WTC11 (cell line): ENCODE measurements at regions of chr5 and their contacts with region 1.

Region 1: GRCh38 chr5:154157483-154158378 is 32.8 kb upstream of the GALNT10 start:
- DNase-seq: peak; percentile 72
- ATAC-seq: peak; percentile 85
- H3K4me3 Mint-ChIP-seq: no peak overlapping the region
- H3K27ac Mint-ChIP-seq: no peak overlapping the region
- H3K4me1 Mint-ChIP-seq: peaks cover 2% of the 10 kb centered on the region
- H3K27me3 Mint-ChIP-seq: no peaks in the 10 kb centered on the region
- CTCF ChIP-seq: peak; percentile 96

Region 2: GRCh38 chr5:154072414-154073171 is 85.1 kb before region 1 on chr5:
- CTCF ChIA-PET with region 1: interaction called, 48 read pairs
- POLR2A ChIA-PET with region 1: no interaction called
- DNase-seq: peak; percentile 87
- ATAC-seq: peak; percentile 92
- H3K4me3 Mint-ChIP-seq: no peak overlapping the region
- H3K27ac Mint-ChIP-seq: no peak overlapping the region
- H3K4me1 Mint-ChIP-seq: peaks cover 10% of the 10 kb centered on the region
- H3K27me3 Mint-ChIP-seq: peaks cover 6% of the 10 kb centered on the region
- CTCF ChIP-seq: peak; percentile 92

Region 3: DNA sequence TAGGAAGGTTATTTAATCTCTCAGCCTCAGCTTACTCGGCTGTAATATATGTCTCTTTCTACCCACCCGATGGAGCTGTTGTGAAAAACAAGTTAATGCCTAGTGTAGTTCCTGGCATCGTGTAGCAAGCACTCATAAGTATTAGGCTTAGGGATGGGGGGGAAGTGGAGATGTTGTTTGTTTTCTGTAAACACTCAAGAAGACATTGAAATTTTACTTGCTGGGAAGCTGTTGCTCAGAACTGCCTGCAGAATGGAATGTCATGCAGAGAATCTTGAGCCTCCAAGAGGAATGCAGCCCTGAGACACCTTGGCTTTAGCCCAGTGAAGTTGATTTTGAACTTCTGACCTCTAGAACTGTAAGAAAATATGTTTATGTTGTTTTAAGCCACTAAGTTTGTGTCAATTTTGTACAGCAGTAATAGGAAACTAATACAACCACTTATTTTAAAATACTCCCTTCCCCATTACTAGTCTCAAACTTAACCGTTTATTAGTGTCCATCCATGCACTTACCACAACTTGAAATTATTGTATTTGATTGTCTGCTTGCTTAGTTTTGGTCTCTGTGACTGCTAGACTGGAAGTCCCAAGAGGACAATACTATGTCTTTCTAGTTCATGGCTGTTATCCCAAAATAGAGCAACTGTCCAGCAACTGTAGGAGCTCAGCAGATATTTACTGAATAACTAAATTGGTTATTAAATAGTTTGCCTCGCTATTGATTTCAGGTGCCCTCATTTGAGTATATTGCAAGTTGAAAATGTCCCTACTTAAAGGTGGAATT is 65.2 kb before region 1 on chr5:
- CTCF ChIA-PET with region 1: interaction called, 14 read pairs
- POLR2A ChIA-PET with region 1: no interaction called
- DNase-seq: no peak
- ATAC-seq: peak; percentile 57
- H3K4me3 Mint-ChIP-seq: no peak overlapping the region
- H3K27ac Mint-ChIP-seq: no peak overlapping the region
- H3K4me1 Mint-ChIP-seq: peaks cover 20% of the 10 kb centered on the region
- H3K27me3 Mint-ChIP-seq: no peaks in the 10 kb centered on the region; the same call in 1 of the 2 replicates
- CTCF ChIP-seq: no peak

Region 4: GRCh38 chr5:154118893-154119336 is 38.8 kb before region 1 on chr5:
- CTCF ChIA-PET with region 1: interaction called, 11 read pairs
- POLR2A ChIA-PET with region 1: no interaction called
- DNase-seq: no peak
- ATAC-seq: peak; percentile 70
- H3K4me3 Mint-ChIP-seq: no peak overlapping the region
- H3K27ac Mint-ChIP-seq: no peak overlapping the region
- H3K4me1 Mint-ChIP-seq: peaks cover 17% of the 10 kb centered on the region
- H3K27me3 Mint-ChIP-seq: peaks cover 9% of the 10 kb centered on the region
- CTCF ChIP-seq: no peak

Region 5: DNA sequence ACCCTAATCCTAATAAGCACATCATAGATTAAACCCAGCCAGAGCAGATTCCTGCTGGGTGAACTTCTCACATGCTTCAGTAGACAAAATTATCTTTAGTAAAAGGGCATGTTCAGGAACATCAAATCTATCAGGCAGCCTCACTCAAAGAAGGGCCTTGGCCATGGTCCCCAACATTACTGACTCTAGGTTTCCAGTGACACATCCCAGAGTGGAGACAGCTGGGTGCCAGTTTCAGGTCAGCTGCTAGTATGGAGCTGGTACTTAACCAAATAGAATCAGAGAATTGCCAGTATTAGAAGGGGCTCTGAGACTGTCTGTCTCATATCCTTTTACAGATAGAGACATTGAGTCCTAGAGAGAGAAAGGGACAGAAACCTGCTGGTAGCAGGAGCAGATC is 11.3 kb before region 1 on chr5:
- CTCF ChIA-PET with region 1: interaction called, 31 read pairs
- POLR2A ChIA-PET with region 1: no interaction called
- DNase-seq: no peak
- ATAC-seq: no peak
- H3K4me3 Mint-ChIP-seq: no peak overlapping the region
- H3K27ac Mint-ChIP-seq: no peak overlapping the region
- H3K4me1 Mint-ChIP-seq: peaks cover 15% of the 10 kb centered on the region
- H3K27me3 Mint-ChIP-seq: peaks cover 13% of the 10 kb centered on the region
- CTCF ChIP-seq: no peak

Region 6: DNA sequence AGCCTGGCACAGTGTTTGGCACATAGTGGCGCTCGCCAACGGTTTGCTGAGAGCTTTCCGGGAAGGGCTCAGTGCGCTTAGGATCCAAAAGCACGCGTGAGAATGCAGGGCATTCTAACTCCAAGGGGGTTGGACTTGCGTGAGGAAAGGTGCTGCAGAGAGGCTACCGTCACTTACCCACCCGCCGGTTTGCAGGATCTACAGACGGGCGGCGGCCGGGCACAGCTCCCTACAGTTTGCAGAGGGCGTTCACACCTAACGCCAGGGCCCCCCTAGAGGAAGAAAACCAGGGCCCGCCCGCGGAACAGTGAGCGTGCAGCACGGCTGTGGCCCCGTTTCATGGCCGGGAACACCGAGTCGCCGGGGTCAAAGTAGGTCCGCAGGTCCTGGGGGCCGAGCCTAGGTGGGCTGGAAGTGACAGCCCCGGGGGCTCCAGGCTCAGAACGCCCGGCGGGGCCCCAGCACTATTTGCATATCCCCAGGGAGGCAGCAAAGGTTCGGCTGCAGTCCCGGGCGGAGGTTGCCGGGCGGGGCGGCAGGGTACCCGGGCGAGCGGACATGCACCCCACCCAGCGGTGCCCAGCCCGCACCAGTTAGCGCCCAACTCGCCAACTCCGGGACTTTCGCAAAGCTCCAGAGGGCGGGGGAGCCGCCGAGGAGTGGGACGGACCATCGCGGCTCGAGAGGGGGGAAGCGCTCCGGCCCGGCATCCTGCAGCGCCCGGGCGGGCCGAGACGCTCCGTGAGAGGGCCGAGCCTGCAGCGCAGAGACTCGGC is 32.3 kb after region 1 on chr5:
- CTCF ChIA-PET with region 1: interaction called, 25 read pairs
- POLR2A ChIA-PET with region 1: interaction called, 3 read pairs
- DNase-seq: peak; percentile 81
- ATAC-seq: peak; percentile 61
- H3K4me3 Mint-ChIP-seq: peak overlapping the region; percentile 73
- H3K27ac Mint-ChIP-seq: no peak overlapping the region
- H3K4me1 Mint-ChIP-seq: peaks cover 50% of the 10 kb centered on the region
- H3K27me3 Mint-ChIP-seq: peaks cover 52% of the 10 kb centered on the region
- CTCF ChIP-seq: no peak

Region 7: GRCh38 chr5:154288145-154288544 is 130.4 kb after region 1 on chr5:
- CTCF ChIA-PET with region 1: no interaction called
- POLR2A ChIA-PET with region 1: no interaction called
- DNase-seq: no peak
- ATAC-seq: no peak
- H3K4me3 Mint-ChIP-seq: no peak overlapping the region
- H3K27ac Mint-ChIP-seq: 0 out of 2 replicates have a peak overlapping the region, but pooled peaks have one; percentile 29
- H3K4me1 Mint-ChIP-seq: peaks cover 43% of the 10 kb centered on the region
- H3K27me3 Mint-ChIP-seq: no peaks in the 10 kb centered on the region
- CTCF ChIP-seq: no peak